Right ventricle myocardium inferior (tissue), 1 donor: ENCODE measurements at regions of chr1 and their contacts with region 1.

Region 1: DNA sequence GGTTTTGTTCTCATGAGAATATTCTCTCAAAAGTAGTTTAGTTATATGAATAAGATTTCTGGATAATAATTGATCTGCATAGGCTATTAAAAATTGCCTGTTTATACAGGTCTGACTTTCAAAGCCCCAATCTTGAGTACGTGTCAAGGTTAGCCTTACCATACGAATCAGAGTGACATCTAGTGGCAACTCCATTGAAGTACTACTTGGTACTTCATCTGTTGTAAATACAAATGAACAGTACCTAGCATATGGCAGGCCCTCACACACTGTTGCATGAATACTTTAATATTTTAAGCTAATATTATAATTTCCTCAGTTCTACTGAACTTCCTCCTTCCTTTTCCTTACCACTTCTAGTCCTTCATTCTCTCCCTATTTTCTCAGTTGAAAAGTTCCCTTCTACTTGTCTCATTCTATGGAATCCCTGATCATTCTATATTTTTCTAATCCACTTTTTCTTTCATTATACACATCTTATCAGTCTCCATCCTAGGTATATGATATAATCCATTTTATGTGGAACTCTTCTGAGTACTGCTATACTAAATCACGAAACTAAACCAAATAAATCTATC is 101.2 kb downstream of the AKT3 start:
- DNase-seq: no peak
- ATAC-seq: peak; percentile 90

Region 2: GRCh38 chr1:243343970-243344937 is 404.5 kb before region 1 on chr1:
- intact Hi-C with region 1: loop called (anchors 5 kb)
- DNase-seq: no peak
- ATAC-seq: no peak

Region 3: DNA sequence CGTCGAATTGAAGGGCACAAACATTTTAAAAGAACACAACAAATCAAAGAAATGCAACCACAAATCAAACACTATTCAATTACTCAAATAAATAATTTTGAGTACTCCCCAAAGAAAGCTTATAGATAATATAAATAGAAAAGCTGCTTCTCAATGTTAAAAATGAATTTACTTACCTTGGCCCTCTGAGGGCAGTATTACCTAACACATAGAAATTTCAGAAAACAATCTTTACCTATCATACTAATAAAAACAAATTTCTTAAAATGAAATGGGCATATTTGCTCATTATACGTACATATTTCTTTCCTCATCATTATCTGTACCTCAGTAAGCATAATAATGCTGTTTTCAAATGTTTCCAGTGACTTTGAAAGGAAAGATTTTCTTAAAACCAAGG is 40.6 kb before region 1 on chr1:
- intact Hi-C with region 1: loop called (anchors 5 kb)
- DNase-seq: no peak
- ATAC-seq: no peak